SK-N-SH (cell line): ENCODE measurements at regions of chr4 and their contacts with region 1.

Region 1: GRCh38 chr4:22410645-22411247 is 105.1 kb downstream of the ADGRA3 start:
- DNase-seq: no peak
- H3K4me3 ChIP-seq: no peak overlapping the region
- H3K27ac ChIP-seq: no peak overlapping the region
- H3K4me1 ChIP-seq: no peaks in the 10 kb centered on the region
- H3K27me3 ChIP-seq: no peaks in the 10 kb centered on the region
- CTCF ChIP-seq: peak; percentile 79
- EP300 ChIP-seq: no peak
- RAD21 ChIP-seq: peak; percentile 59

Region 2: GRCh38 chr4:22389240-22389870 is 21.4 kb before region 1 on chr4:
- CTCF ChIA-PET with region 1: interaction called, 11 read pairs
- POLR2A ChIA-PET with region 1: no interaction called
- DNase-seq: peak; percentile 35
- H3K4me3 ChIP-seq: no peak overlapping the region; a peak in 1 of 4 replicates
- H3K27ac ChIP-seq: no peak overlapping the region
- H3K4me1 ChIP-seq: no peaks in the 10 kb centered on the region
- H3K27me3 ChIP-seq: no peaks in the 10 kb centered on the region
- CTCF ChIP-seq: peak; percentile 95
- EP300 ChIP-seq: no peak
- RAD21 ChIP-seq: peak; percentile 88

Region 3: DNA sequence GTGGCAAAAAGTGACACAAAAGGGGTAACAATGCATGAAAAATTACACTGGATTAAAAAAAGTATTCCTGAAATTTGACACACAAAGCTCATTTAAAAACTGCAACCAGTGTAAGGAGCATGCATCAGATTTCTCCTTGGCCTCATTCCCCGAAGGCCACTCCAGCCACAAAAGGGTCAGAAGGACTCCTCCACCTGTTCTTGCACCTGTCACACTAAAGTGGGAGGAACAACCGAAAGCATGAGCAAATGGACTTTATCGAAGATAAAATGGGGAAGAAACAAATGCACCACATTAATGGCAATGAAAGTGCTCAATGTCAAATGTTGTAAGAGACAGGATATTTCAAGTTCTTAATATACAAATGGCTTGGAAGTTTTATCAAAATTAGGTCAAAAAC is 16.9 kb after region 1 on chr4:
- CTCF ChIA-PET with region 1: interaction called, 20 read pairs
- POLR2A ChIA-PET with region 1: no interaction called
- DNase-seq: no peak
- H3K4me3 ChIP-seq: no peak overlapping the region
- H3K27ac ChIP-seq: no peak overlapping the region
- H3K4me1 ChIP-seq: no peaks in the 10 kb centered on the region
- H3K27me3 ChIP-seq: no peaks in the 10 kb centered on the region
- CTCF ChIP-seq: no peak
- EP300 ChIP-seq: no peak
- RAD21 ChIP-seq: no peak

Region 4: GRCh38 chr4:22607382-22607781 is 196.6 kb after region 1 on chr4:
- CTCF ChIA-PET with region 1: interaction called, 32 read pairs
- POLR2A ChIA-PET with region 1: no interaction called
- DNase-seq: peak; percentile 59
- H3K4me3 ChIP-seq: no peak overlapping the region
- H3K27ac ChIP-seq: no peak overlapping the region
- H3K4me1 ChIP-seq: no peaks in the 10 kb centered on the region; a peak in 1 of 4 replicates
- H3K27me3 ChIP-seq: no peaks in the 10 kb centered on the region
- CTCF ChIP-seq: peak; percentile 38
- EP300 ChIP-seq: no peak
- RAD21 ChIP-seq: peak; percentile 73

Region 5: GRCh38 chr4:22692736-22693135 is 282.0 kb after region 1 on chr4 and contains the start of gene GBA3:
- CTCF ChIA-PET with region 1: interaction called, 13 read pairs
- POLR2A ChIA-PET with region 1: no interaction called
- DNase-seq: no peak
- H3K4me3 ChIP-seq: no peak within 1 kb of the TSS
- H3K27ac ChIP-seq: no peak within 1 kb of the TSS
- H3K4me1 ChIP-seq: no peaks in the 10 kb centered on the region
- H3K27me3 ChIP-seq: peaks cover 21% of the 10 kb centered on the region; the same call in 1 of the 2 replicates
- CTCF ChIP-seq: no peak
- EP300 ChIP-seq: no peak
- RAD21 ChIP-seq: no peak
- polyA plus RNA-seq, gene GBA3: not detected in 2 replicates